ENCODE measurements at regions of chr20 and their contacts with region 1.

Region 1: DNA sequence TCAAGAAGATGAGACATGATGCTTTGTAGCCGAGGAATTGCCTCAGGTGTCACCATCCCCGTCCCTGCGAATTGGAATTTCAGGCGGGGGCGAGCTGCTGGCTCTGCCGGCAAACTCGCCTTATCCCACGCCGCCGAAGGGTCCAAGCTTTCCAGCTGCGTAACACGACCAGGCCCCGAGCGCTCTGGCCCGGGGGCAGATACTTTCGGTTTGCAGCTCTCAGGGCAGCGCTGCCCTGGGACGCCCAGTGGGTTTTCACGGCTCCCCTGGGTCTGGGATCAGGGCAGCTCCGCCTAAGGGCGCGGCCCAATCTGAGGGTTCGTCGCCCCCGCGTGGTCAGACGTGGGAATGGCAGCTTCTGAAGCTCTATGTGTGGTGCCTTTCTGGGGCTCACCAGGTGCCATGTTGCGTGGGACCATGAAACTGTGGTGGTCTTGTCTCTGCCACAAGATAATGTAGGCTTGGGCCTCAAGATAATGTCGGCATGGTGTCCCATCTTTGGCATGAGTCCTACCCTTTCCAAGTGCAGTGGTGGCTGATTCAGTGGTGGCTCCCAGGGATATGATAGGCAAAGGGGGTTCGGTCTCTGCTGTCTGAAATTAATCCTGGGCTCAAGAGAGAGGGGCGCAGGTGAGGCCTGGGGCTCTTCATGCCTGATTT is 20.9 kb downstream of the PIGT start:
- DNase-seq: peak; percentile 96
- H3K4me3 Mint-ChIP-seq: peak overlapping the region; percentile 84
- H3K27ac Mint-ChIP-seq: no peak overlapping the region
- H3K4me1 Mint-ChIP-seq: peaks cover 17% of the 10 kb centered on the region
- H3K27me3 Mint-ChIP-seq: peaks cover 2% of the 10 kb centered on the region

Region 2: DNA sequence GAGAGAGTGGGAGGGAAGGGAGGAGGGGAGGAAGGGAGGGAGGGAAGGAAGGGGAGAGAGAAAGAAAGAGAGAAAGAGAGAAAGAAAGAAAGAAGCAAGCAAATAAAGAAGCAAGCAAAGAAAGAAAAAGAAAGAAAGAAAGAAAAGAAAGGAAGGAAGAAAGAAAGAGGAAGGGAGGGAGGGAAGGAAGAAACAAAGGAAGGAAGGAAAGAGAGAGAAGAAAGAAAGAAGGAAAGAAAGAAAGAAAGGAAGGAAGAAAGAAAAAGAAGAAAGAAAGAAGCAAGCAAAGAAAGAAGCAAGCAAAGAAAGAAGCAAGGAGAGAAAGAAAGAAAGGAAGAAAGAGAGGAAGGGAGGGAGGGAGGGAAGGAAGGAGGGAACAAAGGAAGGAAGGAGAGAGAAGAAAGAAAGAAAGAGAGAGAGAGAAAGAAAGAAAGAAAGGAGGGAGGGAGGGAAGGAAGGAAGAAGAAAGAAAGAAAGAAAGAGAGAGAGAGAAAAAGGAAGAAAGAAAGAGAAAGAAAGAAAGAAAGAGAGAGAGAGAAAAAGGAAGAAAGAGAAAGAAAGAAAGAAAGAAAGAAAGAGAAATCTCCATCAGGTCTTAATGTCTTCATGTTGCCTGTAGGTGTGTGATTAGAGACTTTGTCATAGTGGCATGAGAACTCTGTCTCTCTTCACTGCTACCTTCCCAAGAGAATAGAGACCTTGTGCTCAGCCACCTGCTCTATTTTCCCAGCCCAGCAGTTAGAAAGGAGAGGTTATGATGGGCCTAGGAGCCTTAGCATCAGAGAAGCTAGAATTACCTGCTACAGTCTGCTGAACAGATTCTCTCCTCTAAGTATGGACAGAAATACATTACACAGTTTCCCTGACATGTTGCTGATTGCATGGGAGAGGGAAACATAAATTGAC is 225.0 kb before region 1 on chr20:
- intact Hi-C with region 1: no loop called
- DNase-seq: no peak
- H3K4me3 Mint-ChIP-seq: no peak overlapping the region
- H3K27ac Mint-ChIP-seq: no peak overlapping the region
- H3K4me1 Mint-ChIP-seq: no peaks in the 10 kb centered on the region
- H3K27me3 Mint-ChIP-seq: peaks cover 16% of the 10 kb centered on the region

Region 3: DNA sequence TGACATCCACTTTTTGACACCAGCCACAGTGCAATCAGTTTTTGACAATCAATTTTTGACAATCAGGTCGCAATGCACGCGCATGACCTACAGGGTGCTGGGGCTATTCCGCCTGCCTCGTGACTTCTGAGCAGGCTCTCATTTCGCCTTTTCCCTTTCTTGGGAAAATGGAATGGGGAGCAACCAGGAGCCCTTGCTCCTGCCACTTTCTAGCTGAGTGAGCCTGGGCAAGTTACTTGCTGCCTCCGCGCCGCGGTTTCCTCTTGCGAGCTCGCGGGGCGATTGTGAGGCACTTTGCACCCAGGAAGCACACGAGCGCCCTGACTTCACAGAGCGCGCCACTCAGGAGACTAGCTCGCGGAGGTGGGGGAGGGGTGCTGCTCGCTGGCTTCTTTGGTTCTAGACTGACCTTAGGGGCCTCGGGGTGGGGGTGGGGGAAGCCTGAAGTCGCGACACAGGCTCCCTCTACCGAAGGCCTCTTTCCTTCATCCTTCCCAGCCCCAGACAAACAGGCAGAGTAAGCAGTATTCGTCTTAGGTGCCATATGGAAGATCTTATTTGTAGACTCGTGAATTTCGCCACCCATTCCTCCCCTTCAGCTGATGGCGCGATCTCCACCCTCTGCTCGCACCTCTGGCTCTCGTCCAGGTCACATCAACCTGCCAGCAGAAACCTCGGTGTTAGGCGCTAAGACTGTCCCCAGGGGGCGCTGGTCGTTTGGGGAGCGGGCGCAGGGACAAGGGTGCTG is 63.3 kb before region 1 on chr20:
- intact Hi-C with region 1: loop called (anchors 1 kb)
- DNase-seq: peak; percentile 96
- H3K4me3 Mint-ChIP-seq: peak overlapping the region; percentile 77
- H3K27ac Mint-ChIP-seq: peak overlapping the region; percentile 84
- H3K4me1 Mint-ChIP-seq: peaks cover 25% of the 10 kb centered on the region
- H3K27me3 Mint-ChIP-seq: no peaks in the 10 kb centered on the region

Region 4: GRCh38 chr20:45415774-45416637 is 20.9 kb before region 1 on chr20 and contains the start of gene PIGT:
- intact Hi-C with region 1: loop called (anchors 2 kb)
- DNase-seq: peak; percentile 97
- H3K4me3 Mint-ChIP-seq: peak within 1 kb of the TSS; percentile 93
- H3K27ac Mint-ChIP-seq: peak within 1 kb of the TSS; percentile 94
- H3K4me1 Mint-ChIP-seq: peaks cover 29% of the 10 kb centered on the region
- H3K27me3 Mint-ChIP-seq: no peaks in the 10 kb centered on the region
- total RNA-seq, gene PIGT: 84.7 and 86.6 TPM in 2 replicates

Region 5: DNA sequence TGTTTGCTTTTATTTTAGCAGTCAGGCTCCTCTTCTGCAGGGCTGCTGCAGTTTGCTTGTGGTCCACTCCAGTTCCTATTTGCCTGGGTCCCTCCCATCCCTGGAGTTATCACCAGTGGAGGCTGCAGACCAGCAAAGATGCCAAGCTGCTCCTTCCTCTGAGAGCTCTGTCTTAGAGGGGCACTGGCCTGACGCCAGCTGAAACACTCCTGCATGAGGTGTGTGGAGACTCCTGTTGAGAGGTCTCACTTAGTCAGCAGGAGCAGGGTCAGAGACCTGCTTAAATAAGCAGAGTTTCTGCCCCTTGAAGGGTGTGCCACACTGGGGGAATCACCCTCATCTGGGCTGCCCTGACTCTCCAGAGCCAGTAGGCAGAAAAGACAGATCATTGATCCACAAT is 158.4 kb after region 1 on chr20:
- intact Hi-C with region 1: no loop called
- DNase-seq: peak; percentile 40
- H3K4me3 Mint-ChIP-seq: no peak overlapping the region
- H3K27ac Mint-ChIP-seq: no peak overlapping the region
- H3K4me1 Mint-ChIP-seq: peaks cover 2% of the 10 kb centered on the region
- H3K27me3 Mint-ChIP-seq: peaks cover 26% of the 10 kb centered on the region

Measured in activated CD4-positive, alpha-beta T cell treated with anti-CD3 and anti-CD28 coated beads, Interleukin-2, amount 10 ng/mL, durations not matched to agents 24 days and 14 days (primary cell).